Colonic mucosa (tissue), 4 donors: ENCODE measurements at regions of chr10 and their contacts with region 1.

Region 1: DNA sequence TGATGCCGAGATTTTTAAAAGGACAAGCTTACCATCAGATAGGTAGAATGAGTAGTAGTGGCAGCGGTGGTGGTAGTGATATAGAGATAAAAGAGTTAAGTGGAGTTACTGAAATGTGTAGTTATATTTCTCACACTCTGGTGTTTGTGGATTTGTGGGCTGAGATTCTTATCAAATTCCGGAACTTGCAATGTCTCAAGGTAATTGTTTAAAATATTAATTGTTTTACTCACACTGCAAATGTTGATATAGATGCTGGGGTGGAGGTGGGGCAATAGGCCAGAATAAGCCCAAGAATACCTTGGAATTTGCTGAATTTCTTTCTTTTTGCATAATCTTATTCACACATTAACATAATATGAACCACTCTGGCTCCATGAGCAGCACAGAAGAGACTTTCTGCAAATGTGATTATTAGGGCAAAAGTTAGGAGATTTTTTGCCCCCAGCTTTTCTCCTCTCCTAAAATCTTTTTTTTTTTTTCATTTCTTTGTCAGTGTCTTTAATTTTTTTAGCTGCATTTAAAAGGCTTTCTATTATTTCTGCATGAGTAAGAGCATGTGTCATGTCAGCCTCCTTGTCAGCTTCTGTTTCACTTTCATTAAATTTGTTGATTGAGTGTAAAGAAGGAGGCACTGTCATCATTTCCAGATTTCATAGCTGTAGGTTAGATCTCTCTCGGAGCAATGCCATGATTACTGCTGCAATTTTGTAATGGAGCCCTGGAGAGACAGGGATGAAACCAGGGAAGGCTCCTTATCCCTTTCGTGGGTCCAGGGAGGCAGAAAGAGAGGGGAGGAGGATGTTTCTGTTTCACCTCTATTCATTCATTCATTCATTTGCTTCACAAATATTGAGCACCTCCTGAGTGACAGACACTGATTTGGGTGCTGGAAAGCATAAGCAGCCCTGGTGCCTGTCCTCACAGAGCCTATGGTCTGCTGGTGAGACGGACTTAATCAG is 13.1 kb upstream of the SGMS1 start:
- DNase-seq: no peak
- H3K4me3 ChIP-seq: no peak overlapping the region
- H3K27ac ChIP-seq: no peak overlapping the region
- H3K4me1 ChIP-seq: no peaks in the 10 kb centered on the region
- H3K27me3 ChIP-seq: no peaks in the 10 kb centered on the region
- CTCF ChIP-seq: no peak

Region 2: DNA sequence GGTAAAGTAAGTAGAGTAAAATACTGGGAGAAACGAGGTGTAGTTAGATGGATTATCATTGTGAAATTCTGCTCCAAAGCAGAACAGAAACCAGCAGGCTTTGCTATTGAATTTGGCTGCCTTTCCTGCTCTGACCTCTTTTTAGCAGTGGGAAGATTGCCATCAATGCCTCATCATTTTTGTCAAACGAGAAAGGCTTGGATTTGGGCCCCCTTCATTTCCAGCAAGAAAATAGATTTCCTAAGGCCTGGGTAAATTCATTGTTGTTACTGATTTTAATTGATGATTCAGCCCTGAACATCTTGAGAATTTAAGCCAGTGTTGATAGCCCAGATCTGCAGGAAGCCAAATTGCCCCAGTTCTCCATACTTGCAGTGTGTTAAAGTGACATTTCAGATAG is 350.4 kb before region 1 on chr10:
- intact Hi-C with region 1: loop called (anchors 10 kb)
- DNase-seq: no peak
- H3K4me3 ChIP-seq: no peak overlapping the region
- H3K27ac ChIP-seq: no peak overlapping the region
- H3K4me1 ChIP-seq: no peaks in the 10 kb centered on the region
- H3K27me3 ChIP-seq: no peaks in the 10 kb centered on the region
- CTCF ChIP-seq: no peak